ENCODE measurements at regions of chr10 and their contacts with region 1.

Region 1: DNA sequence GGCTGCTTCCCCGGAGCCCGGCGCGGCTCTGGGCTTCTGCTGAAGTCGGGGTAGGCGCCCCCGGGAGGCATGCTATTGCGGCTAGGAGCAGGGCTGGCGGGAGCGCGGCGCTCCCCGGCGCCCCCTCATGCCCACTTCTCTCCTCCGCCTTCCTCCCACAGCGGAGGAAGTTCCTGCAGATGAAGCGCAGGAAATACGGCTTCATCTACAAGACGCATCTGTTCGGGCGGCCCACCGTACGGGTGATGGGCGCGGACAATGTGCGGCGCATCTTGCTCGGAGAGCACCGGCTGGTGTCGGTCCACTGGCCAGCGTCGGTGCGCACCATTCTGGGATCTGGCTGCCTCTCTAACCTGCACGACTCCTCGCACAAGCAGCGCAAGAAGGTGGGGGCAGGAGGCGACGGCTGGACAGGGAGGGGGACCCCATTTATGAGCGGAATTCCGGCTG is 479 bp downstream of the CYP26A1 start:
- DNase-seq: no peak
- H3K4me3 Mint-ChIP-seq: peak overlapping the region; percentile 63
- H3K27ac Mint-ChIP-seq: no peak overlapping the region
- H3K4me1 Mint-ChIP-seq: peaks cover 32% of the 10 kb centered on the region
- H3K27me3 Mint-ChIP-seq: peaks cover 70% of the 10 kb centered on the region

Region 2: DNA sequence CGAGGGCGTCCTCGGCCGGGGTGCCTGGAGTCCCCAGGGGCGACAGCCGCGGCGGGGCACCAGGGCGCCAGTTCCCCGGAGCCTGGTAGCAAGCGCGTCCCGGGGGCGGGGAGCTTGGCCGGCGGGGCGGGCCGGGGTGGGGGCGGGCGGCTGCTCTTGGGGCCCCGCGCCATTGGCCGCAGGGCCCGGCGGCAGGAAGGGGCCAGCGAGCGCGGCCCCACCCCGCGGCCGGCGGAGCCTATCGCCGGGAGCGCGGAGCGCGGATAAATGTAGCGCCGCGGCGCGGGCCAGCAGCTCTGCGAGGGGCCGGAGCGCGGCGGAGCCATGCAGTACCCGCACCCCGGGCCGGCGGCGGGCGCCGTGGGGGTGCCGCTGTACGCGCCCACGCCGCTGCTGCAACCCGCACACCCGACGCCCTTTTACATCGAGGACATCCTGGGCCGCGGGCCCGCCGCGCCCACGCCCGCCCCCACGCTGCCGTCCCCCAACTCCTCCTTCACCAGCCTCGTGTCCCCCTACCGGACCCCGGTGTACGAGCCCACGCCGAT is 384.4 kb before region 1 on chr10 and contains the start of gene HHEX:
- CTCF ChIA-PET with region 1: no interaction called
- POLR2A ChIA-PET with region 1: no interaction called
- intact Hi-C with region 1: loop called (anchors 10 kb)
- DNase-seq: peak; percentile 46
- H3K4me3 Mint-ChIP-seq: peak within 1 kb of the TSS; percentile 53
- H3K27ac Mint-ChIP-seq: no peak within 1 kb of the TSS
- H3K4me1 Mint-ChIP-seq: peaks cover 20% of the 10 kb centered on the region
- H3K27me3 Mint-ChIP-seq: peaks cover 60% of the 10 kb centered on the region
- total RNA-seq, gene HHEX: 0.31 to 0.55 TPM

Region 3: GRCh38 chr10:93006435-93007039 is 67.6 kb before region 1 on chr10:
- CTCF ChIA-PET with region 1: no interaction called
- POLR2A ChIA-PET with region 1: no interaction called
- intact Hi-C with region 1: no loop called
- DNase-seq: no peak
- H3K4me3 Mint-ChIP-seq: no peak overlapping the region
- H3K27ac Mint-ChIP-seq: no peak overlapping the region
- H3K4me1 Mint-ChIP-seq: no peaks in the 10 kb centered on the region
- H3K27me3 Mint-ChIP-seq: no peaks in the 10 kb centered on the region

Region 4: GRCh38 chr10:93288654-93289634 is 214.8 kb after region 1 on chr10:
- CTCF ChIA-PET with region 1: interaction called, 10 read pairs
- POLR2A ChIA-PET with region 1: no interaction called
- intact Hi-C with region 1: no loop called
- DNase-seq: peak; percentile 61
- H3K4me3 Mint-ChIP-seq: no peak overlapping the region
- H3K27ac Mint-ChIP-seq: no peak overlapping the region
- H3K4me1 Mint-ChIP-seq: no peaks in the 10 kb centered on the region
- H3K27me3 Mint-ChIP-seq: no peaks in the 10 kb centered on the region

Region 5: DNA sequence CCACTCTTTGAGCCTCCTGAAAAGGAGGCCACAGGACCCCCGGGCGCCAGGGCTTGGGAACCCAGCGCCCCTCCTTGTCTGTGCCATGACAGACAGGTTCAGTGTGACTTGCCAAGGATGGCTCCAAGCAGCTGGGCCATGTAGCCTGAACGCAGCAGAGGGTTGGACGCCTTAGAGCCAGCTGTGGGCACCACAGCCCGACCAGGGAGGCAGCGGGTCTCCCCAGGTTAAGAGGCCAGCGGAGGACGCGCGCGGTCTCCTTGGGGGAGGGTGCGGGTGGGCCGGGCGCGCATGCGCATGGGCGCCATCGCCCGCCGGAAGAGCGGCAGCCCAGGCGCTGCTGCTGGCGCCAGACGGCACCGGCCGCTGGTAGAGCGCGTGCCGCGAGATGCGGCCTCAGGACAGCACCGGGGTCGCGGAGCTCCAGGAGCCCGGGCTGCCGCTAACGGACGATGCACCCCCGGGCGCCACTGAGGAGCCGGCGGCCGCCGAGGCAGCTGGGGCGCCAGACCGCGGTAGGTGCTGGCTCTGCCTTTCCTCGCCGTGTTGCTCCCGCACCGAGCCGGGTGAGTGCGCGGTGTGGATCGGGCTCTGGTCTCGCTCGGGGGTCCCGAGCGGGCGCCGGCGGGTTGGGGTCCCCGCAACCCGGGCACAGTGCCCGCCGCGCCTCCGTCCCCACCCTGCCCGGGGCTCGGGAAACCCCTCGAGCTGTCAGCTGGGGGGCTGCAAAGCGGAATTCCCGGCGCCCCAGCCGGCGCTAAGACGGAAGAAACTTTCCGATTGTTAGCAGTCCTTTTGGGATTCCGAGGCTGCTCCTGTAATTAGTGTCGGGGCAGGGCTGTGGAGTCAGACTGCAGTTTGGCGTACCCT is 819.7 kb after region 1 on chr10 and contains the start of gene SLC35G1:
- CTCF ChIA-PET with region 1: no interaction called
- POLR2A ChIA-PET with region 1: no interaction called
- intact Hi-C with region 1: no loop called
- DNase-seq: peak; percentile 80
- H3K4me3 Mint-ChIP-seq: peak within 1 kb of the TSS; percentile 76
- H3K27ac Mint-ChIP-seq: no peak within 1 kb of the TSS
- H3K4me1 Mint-ChIP-seq: peaks cover 30% of the 10 kb centered on the region
- H3K27me3 Mint-ChIP-seq: peaks cover 11% of the 10 kb centered on the region
- total RNA-seq, gene SLC35G1: 2.8 to 3.0 TPM